ENCODE measurements at regions of chr4 and their contacts with region 1.

Region 1: DNA sequence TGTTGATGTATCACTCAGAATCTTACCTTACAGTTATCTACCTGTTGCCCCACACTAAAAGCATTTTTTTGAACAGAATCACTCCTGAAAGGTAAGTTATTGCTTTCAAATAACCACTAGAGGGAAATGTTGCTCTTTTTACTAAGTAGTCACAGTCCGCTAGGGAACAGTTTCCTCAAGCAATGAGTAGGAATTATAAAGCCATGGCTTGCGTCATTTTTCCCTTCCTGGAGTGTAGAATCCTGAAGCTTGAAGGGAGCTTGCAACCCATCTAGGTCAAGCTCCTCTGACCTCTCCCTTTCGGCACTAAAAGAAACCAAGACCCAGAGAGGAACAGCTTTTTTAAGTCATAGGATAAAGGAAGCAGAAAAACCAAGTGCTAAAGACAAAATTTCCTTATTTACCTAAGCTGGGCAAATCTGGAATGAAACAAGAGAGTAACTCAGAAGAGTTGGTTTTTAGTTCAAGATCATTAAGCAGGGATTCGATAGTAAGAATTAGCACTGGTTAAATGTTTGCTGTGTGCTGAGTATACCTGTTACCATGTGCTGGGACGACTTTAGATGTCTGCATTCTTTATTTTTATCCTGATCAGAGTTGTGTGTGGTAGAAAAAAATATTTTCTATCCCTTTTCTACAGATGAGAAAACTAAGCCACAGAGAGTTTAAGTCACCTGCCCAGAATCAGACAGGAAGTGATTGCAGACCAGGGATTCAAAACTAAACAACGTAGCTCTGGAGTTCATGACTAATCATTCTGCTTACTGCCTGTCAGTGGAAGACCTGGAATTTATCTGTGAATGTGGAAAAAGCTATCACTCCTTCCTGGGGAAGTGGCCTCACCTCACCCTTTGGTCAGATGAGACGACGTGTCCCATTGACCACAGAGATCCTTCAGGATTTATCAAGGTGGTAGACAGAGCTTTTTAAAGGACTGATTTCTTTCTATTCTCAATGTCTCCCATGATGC is 631.5 kb downstream of the RAB28 start:
- DNase-seq: peak; percentile 78
- H3K4me3 ChIP-seq: no peak overlapping the region
- H3K27ac ChIP-seq: no peak overlapping the region
- H3K4me1 ChIP-seq: no peaks in the 10 kb centered on the region
- H3K27me3 ChIP-seq: no peaks in the 10 kb centered on the region
- CTCF ChIP-seq: peak; percentile 71

Region 2: GRCh38 chr4:13108096-13108495 is 255.5 kb after region 1 on chr4:
- CTCF ChIA-PET with region 1: no interaction called
- POLR2A ChIA-PET with region 1: no interaction called
- intact Hi-C with region 1: no loop called
- DNase-seq: no peak
- H3K4me3 ChIP-seq: no peak overlapping the region
- H3K27ac ChIP-seq: no peak overlapping the region
- H3K4me1 ChIP-seq: no peaks in the 10 kb centered on the region
- H3K27me3 ChIP-seq: no peaks in the 10 kb centered on the region
- CTCF ChIP-seq: 0 out of 2 replicates have a peak, but pooled peaks have one; percentile 15

Region 3: GRCh38 chr4:13248621-13249298 is 396.1 kb after region 1 on chr4:
- CTCF ChIA-PET with region 1: no interaction called
- POLR2A ChIA-PET with region 1: no interaction called
- intact Hi-C with region 1: loop called (anchors 5 kb)
- DNase-seq: peak; percentile 44
- H3K4me3 ChIP-seq: no peak overlapping the region
- H3K27ac ChIP-seq: no peak overlapping the region
- H3K4me1 ChIP-seq: peaks cover 9% of the 10 kb centered on the region
- H3K27me3 ChIP-seq: no peaks in the 10 kb centered on the region
- CTCF ChIP-seq: peak; percentile 58